Astrocyte of the cerebellum (primary cell): ENCODE measurements at regions of chrX and their contacts with region 1.

Region 1: GRCh38 chrX:151753313-151754041 is 18.9 kb downstream of the CNGA2 start:
- DNase-seq: peak; percentile 38
- H3K4me3 ChIP-seq: no peak overlapping the region
- CTCF ChIP-seq: peak; percentile 85

Region 2: DNA sequence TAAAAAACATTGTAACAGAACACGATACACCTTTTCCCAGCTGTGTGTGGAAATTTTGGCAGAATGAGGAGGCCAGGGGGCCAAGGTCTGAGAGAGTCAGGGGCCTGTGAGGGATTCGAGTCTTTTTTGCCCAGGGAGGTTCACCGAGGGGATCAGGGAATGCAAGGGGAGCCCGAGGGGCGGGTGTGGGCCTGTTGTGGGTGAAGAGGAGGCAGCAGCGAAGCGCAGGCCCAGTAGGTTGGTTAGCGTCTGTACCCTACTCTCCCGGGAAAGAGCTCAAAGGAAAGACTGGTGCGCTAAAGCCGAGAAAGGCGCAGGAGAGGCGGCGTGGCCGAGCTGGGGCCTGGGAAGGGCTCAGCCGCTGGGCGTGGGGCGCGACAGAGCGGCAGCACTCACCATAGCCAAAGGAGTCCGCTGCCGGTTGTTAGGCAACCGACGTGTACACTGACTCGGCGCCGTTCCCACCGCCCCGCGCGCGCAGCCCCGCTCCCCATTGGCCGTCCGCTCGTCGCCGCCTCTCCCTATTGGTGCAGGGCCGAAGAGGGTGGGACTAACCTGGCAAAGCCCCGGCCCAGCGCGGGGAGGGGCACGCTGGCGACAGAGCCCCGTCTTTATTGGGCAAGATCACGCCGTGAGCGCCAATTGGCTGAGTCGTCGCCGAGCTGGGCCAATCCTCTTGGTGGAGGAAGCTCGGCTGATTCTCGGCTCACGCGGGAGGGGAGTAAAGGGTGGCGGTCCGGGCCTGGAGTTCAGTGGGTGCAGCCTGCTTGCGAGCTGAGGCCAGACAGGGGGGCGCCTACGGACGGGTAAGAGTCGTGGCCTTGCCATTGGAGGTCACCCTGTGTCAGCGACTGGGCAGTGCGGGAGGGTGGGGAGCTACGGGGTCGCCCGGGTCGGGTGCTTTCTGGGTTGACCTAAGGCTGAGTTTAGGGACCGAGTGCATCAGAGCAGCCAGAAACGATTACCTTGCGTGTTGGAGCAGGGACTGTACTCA is 1077.1 kb after region 1 on chrX and contains the starts of genes CETN2 and NSDHL:
- in situ Hi-C with region 1: loop called (anchors 25 kb)
- DNase-seq: peak; percentile 88
- H3K4me3 ChIP-seq: peak within 1 kb of the TSS; percentile 69
- CTCF ChIP-seq: no peak